ENCODE measurements at regions of chr10 and their contacts with region 1.

Region 1: DNA sequence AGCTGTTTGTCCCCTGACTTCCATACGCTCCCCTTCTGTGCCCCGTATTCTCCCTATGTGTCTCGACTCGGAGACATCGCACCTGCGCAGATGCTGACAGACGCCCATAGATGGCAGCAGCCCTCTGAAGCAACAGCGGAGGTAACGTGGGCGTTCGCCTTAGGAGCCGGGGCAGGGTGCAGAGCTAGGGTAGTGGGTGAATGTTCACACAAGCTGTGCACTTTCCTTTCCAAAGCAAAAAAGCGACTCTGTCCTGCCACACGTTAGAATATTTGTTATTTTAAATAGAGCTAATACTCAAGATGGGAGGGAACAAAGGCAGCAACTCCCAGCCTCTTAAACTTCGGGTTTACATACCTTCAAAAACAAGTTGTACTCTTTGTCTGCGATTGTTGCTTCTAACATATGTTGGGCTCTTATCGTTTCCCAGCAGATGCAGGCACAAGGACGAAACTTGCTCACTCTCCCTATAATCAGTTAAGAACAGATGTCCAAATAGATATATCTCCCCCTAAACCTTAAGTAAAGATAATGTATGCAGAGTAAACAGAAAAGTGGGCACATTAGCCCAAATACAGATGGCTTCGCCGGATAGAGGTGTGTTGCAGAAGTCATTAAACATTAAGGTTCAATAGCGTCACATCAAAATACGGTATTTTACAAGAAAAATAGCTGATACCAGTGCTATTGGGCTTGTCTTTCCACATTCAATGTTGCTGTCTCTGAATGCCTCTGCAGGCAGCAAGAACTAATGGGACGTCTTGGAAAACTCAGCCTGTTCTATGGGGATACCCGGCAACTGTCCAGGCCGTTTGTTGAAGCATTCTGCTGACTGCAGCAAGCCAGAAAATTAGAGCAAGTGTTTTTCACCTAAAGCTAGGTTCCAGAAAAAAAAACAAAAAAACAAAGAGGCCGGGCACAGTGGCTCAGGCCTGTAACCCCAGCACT is 340.3 kb upstream of the PRKCQ start:
- DNase-seq: peak; percentile 94
- H3K4me3 ChIP-seq: peak overlapping the region; percentile 10 to 22 (median 18)
- H3K27ac ChIP-seq: no peak overlapping the region
- H3K4me1 ChIP-seq: peaks cover 0 to 24% (median 16%) of the 10 kb centered on the region in 4 donors
- H3K27me3 ChIP-seq: no peaks in the 10 kb centered on the region
- CTCF ChIP-seq: peak; percentile 67 to 81 (median 72)
- EP300 ChIP-seq: no peak
- POLR2A ChIP-seq: no peak

Region 2: GRCh38 chr10:6936931-6937330 is 16.6 kb after region 1 on chr10:
- intact Hi-C with region 1: no loop called
- DNase-seq: no peak
- H3K4me3 ChIP-seq: no peak overlapping the region
- H3K27ac ChIP-seq: no peak overlapping the region
- H3K4me1 ChIP-seq: no peaks in the 10 kb centered on the region
- H3K27me3 ChIP-seq: no peaks in the 10 kb centered on the region
- CTCF ChIP-seq: no peak
- EP300 ChIP-seq: no peak
- POLR2A ChIP-seq: no peak

Region 3: DNA sequence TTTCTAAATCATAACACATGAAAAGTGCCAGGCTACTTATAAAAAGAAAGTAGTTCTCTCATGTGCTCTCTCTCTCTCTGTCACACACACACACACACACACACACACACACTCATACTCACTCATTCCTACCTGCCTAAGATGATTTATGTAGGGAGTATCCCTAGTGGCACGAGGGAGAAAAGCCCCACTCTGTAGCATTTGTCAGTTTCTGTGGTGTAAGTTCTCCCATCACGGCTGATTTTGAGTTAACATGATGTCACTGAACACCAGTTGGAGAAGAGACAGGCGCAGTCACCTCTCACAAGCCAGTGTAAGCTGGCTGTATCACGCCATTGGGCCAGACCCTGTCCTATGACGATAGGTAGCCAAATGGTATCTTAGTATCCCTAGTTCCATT is 95.1 kb after region 1 on chr10:
- intact Hi-C with region 1: no loop called
- DNase-seq: no peak
- H3K4me3 ChIP-seq: no peak overlapping the region
- H3K27ac ChIP-seq: no peak overlapping the region
- H3K4me1 ChIP-seq: no peaks in the 10 kb centered on the region
- H3K27me3 ChIP-seq: no peaks in the 10 kb centered on the region
- CTCF ChIP-seq: no peak
- EP300 ChIP-seq: no peak
- POLR2A ChIP-seq: no peak

Region 4: DNA sequence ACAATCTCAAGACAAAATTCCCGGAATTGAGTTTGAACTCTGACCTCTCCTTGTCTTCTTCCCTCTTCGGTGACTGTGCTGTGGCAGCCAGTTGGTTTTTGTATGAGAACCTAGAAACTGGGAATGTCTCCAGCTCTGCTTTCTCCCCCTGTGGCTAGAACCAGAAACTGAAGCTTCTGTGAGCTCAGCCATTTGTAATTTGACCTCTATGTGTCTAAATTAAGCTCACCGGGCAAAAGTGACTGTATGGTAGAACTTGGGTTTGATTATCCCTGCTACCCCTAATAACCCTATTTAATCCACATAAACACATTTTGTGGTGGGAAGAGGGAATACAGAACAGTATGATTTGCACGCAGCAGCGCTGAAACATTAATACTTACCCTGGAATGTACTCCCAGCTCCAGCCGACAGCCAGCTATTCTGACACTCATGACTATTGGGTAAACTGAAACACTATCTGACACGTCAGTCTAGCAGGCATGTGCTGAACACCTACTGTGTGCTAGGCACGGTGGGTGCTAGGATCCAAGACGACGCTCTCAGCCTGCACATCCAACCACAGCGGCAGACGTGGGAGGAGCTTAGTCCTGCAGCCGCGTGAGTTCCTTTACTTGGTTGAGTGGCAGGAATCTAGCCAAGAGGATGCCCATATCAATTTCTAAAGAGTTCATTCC is 165.7 kb after region 1 on chr10:
- intact Hi-C with region 1: loop called (anchors 10 kb)
- DNase-seq: no peak
- H3K4me3 ChIP-seq: no peak overlapping the region
- H3K27ac ChIP-seq: peak overlapping the region in 2 of 4 donors; percentile 16
- H3K4me1 ChIP-seq: peaks cover 4 to 83% (median 62%) of the 10 kb centered on the region in 4 donors
- H3K27me3 ChIP-seq: no peaks in the 10 kb centered on the region
- CTCF ChIP-seq: peak in 1 of 3 experiments; percentile 19
- EP300 ChIP-seq: no peak
- POLR2A ChIP-seq: no peak

Region 5: GRCh38 chr10:7260412-7260900 is 340.1 kb after region 1 on chr10:
- intact Hi-C with region 1: loop called (anchors 5 kb)
- DNase-seq: peak; percentile 96
- H3K4me3 ChIP-seq: no peak overlapping the region
- H3K27ac ChIP-seq: peak overlapping the region; percentile 76 to 83 (median 78)
- H3K4me1 ChIP-seq: peaks cover 39 to 52% (median 45%) of the 10 kb centered on the region in 4 donors
- H3K27me3 ChIP-seq: no peaks in the 10 kb centered on the region
- CTCF ChIP-seq: peak; percentile 81 to 91 (median 88)
- EP300 ChIP-seq: no peak
- POLR2A ChIP-seq: no peak